RWPE1 (cell line): ENCODE measurements at regions of chr20 and their contacts with region 1.

Region 1: GRCh38 chr20:37007898-37008649 is 56.6 kb upstream of the SAMHD1 start:
- DNase-seq: peak; percentile 26
- H3K27ac ChIP-seq: no peak overlapping the region
- CTCF ChIP-seq: no peak

Region 2: GRCh38 chr20:36988494-36988966 is 19.5 kb before region 1 on chr20:
- CTCF ChIA-PET with region 1: no interaction called
- POLR2A ChIA-PET with region 1: no interaction called
- DNase-seq: no peak
- H3K27ac ChIP-seq: no peak overlapping the region
- CTCF ChIP-seq: no peak

Region 3: GRCh38 chr20:37032077-37032476 is 24.0 kb after region 1 on chr20:
- CTCF ChIA-PET with region 1: no interaction called
- POLR2A ChIA-PET with region 1: no interaction called
- DNase-seq: no peak
- H3K27ac ChIP-seq: no peak overlapping the region
- CTCF ChIP-seq: no peak

Region 4: DNA sequence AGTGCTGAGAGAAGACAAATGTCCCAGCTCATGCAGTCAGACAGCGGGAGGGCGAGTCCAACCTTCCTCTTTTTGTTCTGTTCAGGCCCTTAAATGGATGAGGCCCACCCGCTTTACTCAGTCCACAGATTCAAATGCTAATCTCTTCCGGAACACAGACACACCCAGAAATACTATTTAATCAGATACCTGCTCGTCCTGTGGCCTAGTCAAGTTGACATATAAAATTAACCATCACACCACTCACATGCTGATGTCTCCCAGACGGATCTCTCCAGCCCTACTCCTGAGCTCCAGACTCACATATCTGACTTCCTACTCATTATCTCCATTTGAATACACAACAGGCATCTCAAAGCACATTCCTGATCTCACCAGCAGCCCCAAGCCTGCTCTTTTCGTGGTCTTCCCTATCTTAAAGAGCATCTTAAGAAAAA is 311.2 kb after region 1 on chr20:
- CTCF ChIA-PET with region 1: no interaction called
- POLR2A ChIA-PET with region 1: no interaction called
- DNase-seq: no peak
- H3K27ac ChIP-seq: peak overlapping the region; percentile 51
- CTCF ChIP-seq: no peak

Region 5: DNA sequence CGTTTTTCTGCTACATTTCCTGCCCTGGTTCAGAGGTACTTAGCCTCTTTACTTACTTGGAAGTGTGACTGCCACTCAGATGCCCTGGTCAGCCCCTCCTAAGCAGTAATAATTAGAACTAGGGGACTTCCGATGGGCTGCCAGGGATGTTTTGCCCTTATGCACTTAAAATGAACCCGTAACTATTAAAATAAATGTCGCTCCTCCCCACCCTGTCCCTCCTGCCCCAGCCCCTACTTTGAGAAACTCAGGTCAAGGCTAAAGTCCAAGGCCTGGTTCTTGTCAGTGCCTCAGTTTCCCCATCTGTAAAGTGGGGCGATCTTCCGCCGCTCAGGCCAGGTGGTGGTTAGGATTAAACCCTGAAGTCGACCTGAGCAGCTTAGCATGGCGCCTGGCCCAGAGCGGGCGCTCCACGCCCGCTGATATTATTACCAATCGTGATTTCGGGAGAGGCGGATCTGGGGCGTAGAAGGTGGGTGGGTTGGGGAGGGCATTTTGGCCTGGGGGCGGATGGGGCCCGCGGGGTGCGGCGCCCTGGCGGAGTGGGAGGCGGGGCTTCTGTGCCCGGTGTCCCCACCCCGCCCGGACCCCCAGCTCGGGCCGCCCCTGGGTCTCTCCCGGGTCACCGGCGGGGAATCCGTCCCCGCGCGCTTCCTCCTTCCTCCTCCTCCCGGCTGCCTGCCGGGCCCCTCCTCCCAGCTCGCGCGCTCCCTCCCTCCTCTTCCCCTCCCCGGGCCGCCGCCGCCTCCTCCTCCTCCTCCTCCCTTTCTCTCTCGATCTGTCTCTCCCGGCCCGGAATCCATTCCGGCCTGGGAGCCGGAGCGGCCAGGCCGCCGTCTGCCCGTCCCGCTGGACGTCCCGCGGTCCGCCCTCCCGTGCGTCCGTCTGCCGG is 337.5 kb after region 1 on chr20 and contains the start of gene SRC:
- CTCF ChIA-PET with region 1: no interaction called
- POLR2A ChIA-PET with region 1: interaction called, 10 read pairs
- DNase-seq: peak; percentile 93
- H3K27ac ChIP-seq: peak within 1 kb of the TSS; percentile 86
- CTCF ChIP-seq: no peak